Aorta (tissue), 5 donors: ENCODE measurements at regions of chr1 and their contacts with region 1.

Region 1: GRCh38 chr1:109917768-109918606 is 7.3 kb downstream of the CSF1 start:
- DNase-seq: no peak
- ATAC-seq: no peak
- H3K4me3 ChIP-seq: no peak overlapping the region
- H3K27ac ChIP-seq: no peak overlapping the region
- H3K4me1 ChIP-seq: no peaks in the 10 kb centered on the region
- H3K27me3 ChIP-seq: no peaks in the 10 kb centered on the region

Region 2: GRCh38 chr1:109979489-109980091 is 61.6 kb after region 1 on chr1:
- intact Hi-C with region 1: loop called (anchors 5 kb)
- DNase-seq: peak in 1 of 2 donors; percentile 62
- ATAC-seq: no peak
- H3K4me3 ChIP-seq: no peak overlapping the region
- H3K27ac ChIP-seq: no peak overlapping the region
- H3K4me1 ChIP-seq: no peaks in the 10 kb centered on the region
- H3K27me3 ChIP-seq: no peaks in the 10 kb centered on the region